HEK293 (cell line): ENCODE measurements at regions of chr6 and their contacts with region 1.

Region 1: GRCh38 chr6:39929738-39930461 is 4.4 kb downstream of the MOCS1 start:
- H3K4me3 ChIP-seq: no peak overlapping the region
- H3K27ac ChIP-seq: no peak overlapping the region
- H3K4me1 ChIP-seq: 0 out of 2 replicates have a peak, but pooled peaks cover 2% of the 10 kb centered on the region
- CTCF ChIP-seq: no peak

Region 2: GRCh38 chr6:39568896-39569295 is 361.0 kb before region 1 on chr6:
- CTCF ChIA-PET with region 1: no interaction called
- POLR2A ChIA-PET with region 1: interaction called, 11 read pairs
- H3K4me3 ChIP-seq: no peak overlapping the region
- H3K27ac ChIP-seq: no peak overlapping the region
- H3K4me1 ChIP-seq: peaks cover 4% of the 10 kb centered on the region; the same call in 1 of the 2 replicates
- CTCF ChIP-seq: no peak

Region 3: GRCh38 chr6:39906318-39906761 is 23.6 kb before region 1 on chr6:
- CTCF ChIA-PET with region 1: no interaction called
- POLR2A ChIA-PET with region 1: no interaction called
- H3K4me3 ChIP-seq: no peak overlapping the region
- H3K27ac ChIP-seq: no peak overlapping the region
- H3K4me1 ChIP-seq: no peaks in the 10 kb centered on the region
- CTCF ChIP-seq: no peak

Region 4: GRCh38 chr6:39965751-39966150 is 35.9 kb after region 1 on chr6:
- CTCF ChIA-PET with region 1: no interaction called
- POLR2A ChIA-PET with region 1: no interaction called
- H3K4me3 ChIP-seq: no peak overlapping the region
- H3K27ac ChIP-seq: no peak overlapping the region
- H3K4me1 ChIP-seq: no peaks in the 10 kb centered on the region
- CTCF ChIP-seq: no peak